PC-3 (cell line): ENCODE measurements at regions of chr5 and their contacts with region 1.

Region 1: DNA sequence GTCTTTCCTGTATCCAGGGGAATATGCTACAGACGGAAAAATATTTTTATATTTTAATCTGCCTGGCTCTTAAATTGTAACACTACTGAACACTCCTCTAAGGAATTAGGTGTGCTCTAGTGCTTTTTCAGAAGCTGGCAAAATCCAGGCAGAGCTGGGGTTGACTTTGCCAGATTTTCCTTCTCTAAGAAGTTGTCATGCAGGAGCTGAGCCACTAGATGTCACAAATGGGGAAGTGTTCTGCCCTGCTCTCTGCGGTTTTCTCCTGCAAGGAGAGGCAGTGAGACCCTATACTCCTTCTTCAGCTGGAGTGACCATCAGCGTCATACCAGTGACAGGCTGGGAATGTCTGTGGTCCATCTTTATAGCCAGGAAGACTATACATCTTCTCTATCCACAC is 112.5 kb downstream of the HAPLN1 start:
- DNase-seq: peak; percentile 67
- ATAC-seq: peak; percentile 92
- H3K4me3 ChIP-seq: no peak overlapping the region
- H3K27ac ChIP-seq: no peak overlapping the region
- H3K4me1 ChIP-seq: no peaks in the 10 kb centered on the region
- H3K27me3 ChIP-seq: no peaks in the 10 kb centered on the region
- CTCF ChIP-seq: peak; percentile 68

Region 2: DNA sequence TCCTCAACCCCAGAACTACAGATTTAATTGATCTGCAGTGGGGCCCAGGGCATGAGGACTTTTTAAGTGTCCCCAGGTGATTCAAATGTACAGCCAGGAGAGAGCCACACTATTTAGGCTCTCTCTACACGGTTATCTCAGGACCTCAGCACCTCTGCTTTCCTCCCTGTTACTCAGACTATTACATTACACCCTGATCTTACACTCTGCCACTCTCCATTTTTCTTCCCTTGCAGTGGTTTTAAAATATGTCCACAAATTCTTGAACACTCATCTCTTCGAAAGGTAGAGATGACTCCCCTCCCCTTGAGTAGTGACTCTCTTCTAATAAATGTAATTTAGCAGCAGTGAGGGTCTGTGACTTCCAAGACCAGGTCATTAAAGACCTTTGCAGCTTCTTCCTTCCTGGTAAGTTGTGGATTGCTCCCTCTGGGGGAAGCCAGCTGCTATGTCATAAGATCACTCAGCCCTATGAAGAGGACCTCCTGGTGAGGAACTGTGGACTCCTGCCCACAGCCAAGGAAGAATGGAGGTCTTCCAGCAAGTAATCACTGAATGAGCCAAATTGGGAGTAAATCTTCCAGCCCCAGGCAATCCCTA is 1769.7 kb before region 1 on chr5:
- CTCF ChIA-PET with region 1: no interaction called
- POLR2A ChIA-PET with region 1: no interaction called
- intact Hi-C with region 1: loop called (anchors 10 kb)
- DNase-seq: peak; percentile 49
- ATAC-seq: peak; percentile 82
- H3K4me3 ChIP-seq: no peak overlapping the region
- H3K27ac ChIP-seq: no peak overlapping the region
- H3K4me1 ChIP-seq: peaks cover 11% of the 10 kb centered on the region
- H3K27me3 ChIP-seq: no peaks in the 10 kb centered on the region
- CTCF ChIP-seq: peak; percentile 68

Region 3: DNA sequence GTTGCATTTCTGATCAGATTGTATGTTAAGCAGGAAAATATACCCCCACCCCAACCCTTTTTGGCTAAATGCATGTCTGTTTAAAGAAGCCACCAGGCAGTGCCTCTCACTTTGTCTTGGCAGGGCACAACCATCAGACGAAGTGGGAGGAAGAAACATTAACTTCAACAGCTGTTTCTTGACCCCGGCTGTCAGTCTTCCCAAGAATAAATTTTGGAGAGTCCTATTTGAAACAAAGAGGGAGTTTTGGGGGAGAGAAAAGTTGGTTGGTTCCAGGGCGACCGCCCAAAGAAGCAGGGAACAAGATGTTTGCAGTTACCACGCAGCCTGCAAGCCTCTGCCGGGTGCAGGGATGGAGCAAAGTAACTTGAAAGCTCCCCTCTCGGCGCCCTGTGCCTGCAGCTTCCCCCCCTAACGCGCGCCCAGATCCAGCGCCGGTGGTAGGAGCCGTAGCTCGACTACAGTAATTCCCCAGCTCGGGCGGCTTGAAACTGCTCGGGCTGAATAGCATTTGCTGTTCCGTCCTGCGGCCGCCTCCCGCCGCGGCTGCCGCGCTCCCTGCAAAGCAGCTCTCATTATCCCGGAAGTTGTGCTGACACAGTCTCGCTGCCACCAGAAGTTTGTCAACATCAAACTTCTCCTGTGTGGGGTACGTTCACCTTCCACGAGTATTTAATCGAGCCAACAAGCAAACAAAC is 1756.5 kb before region 1 on chr5:
- CTCF ChIA-PET with region 1: no interaction called
- POLR2A ChIA-PET with region 1: no interaction called
- intact Hi-C with region 1: loop called (anchors 5 kb)
- DNase-seq: peak; percentile 86
- ATAC-seq: peak; percentile 92
- H3K4me3 ChIP-seq: peak overlapping the region; percentile 67
- H3K27ac ChIP-seq: peak overlapping the region; percentile 71
- H3K4me1 ChIP-seq: peaks cover 10% of the 10 kb centered on the region
- H3K27me3 ChIP-seq: no peaks in the 10 kb centered on the region
- CTCF ChIP-seq: no peak

Region 4: GRCh38 chr5:83430130-83431010 is 177.8 kb before region 1 on chr5:
- CTCF ChIA-PET with region 1: no interaction called
- POLR2A ChIA-PET with region 1: no interaction called
- intact Hi-C with region 1: no loop called
- DNase-seq: peak; percentile 78
- ATAC-seq: peak; percentile 97
- H3K4me3 ChIP-seq: no peak overlapping the region
- H3K27ac ChIP-seq: no peak overlapping the region
- H3K4me1 ChIP-seq: no peaks in the 10 kb centered on the region; the same call in 1 of the 2 replicates
- H3K27me3 ChIP-seq: no peaks in the 10 kb centered on the region
- CTCF ChIP-seq: peak; percentile 99

Region 5: DNA sequence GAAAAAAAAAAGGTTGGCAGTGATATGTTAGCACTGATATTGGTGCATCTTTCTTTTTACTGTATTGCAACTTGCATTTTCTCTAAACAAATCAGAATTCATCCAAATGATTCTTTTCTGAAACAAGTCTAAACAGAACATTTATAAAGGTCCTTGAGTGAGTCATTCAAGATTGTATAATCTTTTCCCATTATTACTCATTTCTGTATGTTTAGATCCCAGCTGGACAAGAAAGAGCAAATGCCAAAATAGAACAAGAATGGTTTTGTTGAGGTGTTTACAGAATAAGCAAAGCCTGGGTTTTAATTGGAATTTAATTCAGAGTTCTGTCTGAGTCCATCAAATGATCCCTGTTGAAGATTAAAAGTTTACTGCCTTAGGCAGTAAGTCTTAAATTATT is 24.3 kb before region 1 on chr5:
- CTCF ChIA-PET with region 1: no interaction called
- POLR2A ChIA-PET with region 1: no interaction called
- intact Hi-C with region 1: no loop called
- DNase-seq: peak; percentile 64
- ATAC-seq: peak; percentile 90
- H3K4me3 ChIP-seq: no peak overlapping the region
- H3K27ac ChIP-seq: peak overlapping the region; percentile 62
- H3K4me1 ChIP-seq: peaks cover 19% of the 10 kb centered on the region
- H3K27me3 ChIP-seq: no peaks in the 10 kb centered on the region
- CTCF ChIP-seq: no peak